Left ventricle myocardium superior (tissue), 1 donor: ENCODE measurements at regions of chr6 and their contacts with region 1.

Region 1: DNA sequence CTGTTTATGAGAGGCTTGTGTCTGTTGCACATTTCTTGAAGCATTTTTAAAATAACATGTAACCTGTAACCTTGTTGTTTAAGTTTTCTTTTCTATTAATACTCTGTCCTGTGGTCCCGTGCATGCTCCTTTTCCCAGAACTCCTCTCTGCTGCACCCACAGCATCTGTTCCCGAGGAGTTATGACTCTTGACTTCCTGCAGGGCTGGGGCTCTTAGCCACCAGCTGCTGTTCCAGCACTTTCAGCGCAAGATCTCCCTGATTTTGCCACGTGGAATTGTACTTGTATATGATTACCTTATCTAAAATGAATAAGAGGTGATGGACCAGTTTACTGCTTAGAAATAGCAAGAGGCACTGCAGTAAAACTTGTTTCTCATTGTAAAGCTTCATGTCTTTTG is 150.6 kb downstream of the QKI start:
- DNase-seq: no peak
- ATAC-seq: peak; percentile 51

Region 2: GRCh38 chr6:163413345-163414116 is 151.6 kb before region 1 on chr6:
- intact Hi-C with region 1: no loop called
- DNase-seq: peak; percentile 94
- ATAC-seq: peak; percentile 89

Region 3: DNA sequence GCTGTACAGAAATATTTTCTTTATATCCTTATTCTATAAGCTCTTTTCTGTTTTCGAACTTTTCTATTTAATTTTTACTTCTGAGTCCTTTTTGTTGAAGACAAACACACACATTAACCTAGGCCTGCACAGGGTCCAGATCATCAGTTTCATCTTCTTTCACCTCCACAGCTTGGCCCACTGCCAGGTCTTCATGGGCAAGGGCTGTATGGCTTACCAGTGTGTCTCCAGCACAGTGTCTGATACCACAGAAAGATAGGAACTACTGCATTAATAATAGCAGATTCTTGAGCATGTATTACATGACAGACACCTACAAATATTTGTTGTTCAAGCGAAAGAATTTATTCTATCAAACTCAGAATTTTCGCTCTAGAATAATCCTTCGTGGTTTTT is 126.2 kb before region 1 on chr6:
- intact Hi-C with region 1: loop called (anchors 10 kb)
- DNase-seq: peak; percentile 72
- ATAC-seq: peak; percentile 66

Region 4: DNA sequence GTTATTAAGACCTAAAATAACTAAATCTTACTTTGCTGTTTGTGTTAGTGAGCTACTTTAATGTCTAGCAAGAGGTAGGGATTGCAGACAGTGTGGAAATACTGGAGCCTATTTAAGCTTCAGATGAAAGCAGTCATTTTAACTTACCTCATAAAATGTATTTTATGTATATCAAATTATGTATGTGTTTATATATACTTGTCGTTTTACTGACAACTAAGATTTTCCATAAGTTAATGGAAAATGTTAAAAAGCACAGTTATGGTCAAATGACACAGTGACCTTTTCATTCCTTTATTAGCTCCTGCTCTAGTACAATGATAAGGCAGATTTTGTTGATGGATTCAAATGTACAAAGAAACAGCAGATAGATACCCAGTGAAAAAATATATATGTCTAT is 116.1 kb before region 1 on chr6:
- intact Hi-C with region 1: no loop called
- DNase-seq: no peak
- ATAC-seq: no peak

Region 5: DNA sequence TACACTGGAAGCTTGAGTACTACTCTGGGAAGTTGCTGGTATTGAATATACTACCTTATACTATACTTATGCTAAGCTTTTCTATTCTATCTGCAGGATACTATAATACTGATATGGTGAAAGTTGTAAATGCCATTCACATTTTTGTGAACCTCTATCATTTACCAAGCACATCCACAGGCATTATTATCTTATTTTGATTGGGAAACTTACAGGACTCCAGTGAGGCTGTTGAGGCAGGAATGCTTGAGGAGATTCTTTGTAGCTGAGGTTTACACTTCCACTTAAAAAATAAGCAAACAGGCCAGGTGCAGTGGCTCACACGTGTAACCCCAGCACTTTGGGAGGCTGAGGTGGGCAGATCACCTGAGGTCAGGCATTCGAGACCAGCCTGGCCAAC is 292.3 kb after region 1 on chr6:
- intact Hi-C with region 1: no loop called
- DNase-seq: no peak
- ATAC-seq: no peak

Region 6: GRCh38 chr6:163956571-163957407 is 391.6 kb after region 1 on chr6:
- intact Hi-C with region 1: loop called (anchors 10 kb)
- DNase-seq: peak; percentile 85
- ATAC-seq: peak; percentile 85